ENCODE measurements at regions of chr2 and their contacts with region 1.

Region 1: GRCh38 chr2:182077451-182078142 is 91.9 kb downstream of the PPP1R1C start:
- DNase-seq: peak in 2 of 4 experiments; percentile 7 to 68
- ATAC-seq: peak; percentile 74
- H3K4me3 ChIP-seq: no peak overlapping the region
- H3K27ac ChIP-seq: no peak overlapping the region
- H3K4me1 ChIP-seq: no peaks in the 10 kb centered on the region
- H3K27me3 ChIP-seq: no peaks in the 10 kb centered on the region
- CTCF ChIP-seq: peak; percentile 21 to 64 (median 59); a peak in 5 of 6 replicates
- EP300 ChIP-seq: no peak
- POLR2A ChIP-seq: no peak
- RAD21 ChIP-seq: peak; percentile 70 to 83

Region 2: GRCh38 chr2:181738074-181738473 is 339.5 kb before region 1 on chr2:
- CTCF ChIA-PET with region 1: interaction called, 8 read pairs
- POLR2A ChIA-PET with region 1: no interaction called
- in situ Hi-C with region 1: loop called (anchors 10 kb)
- intact Hi-C with region 1: loop called (anchors 1 kb)
- DNase-seq: peak in 2 of 4 experiments; percentile 8 to 11
- ATAC-seq: peak; percentile 67
- H3K4me3 ChIP-seq: no peak overlapping the region
- H3K27ac ChIP-seq: no peak overlapping the region
- H3K4me1 ChIP-seq: no peaks in the 10 kb centered on the region
- H3K27me3 ChIP-seq: no peaks in the 10 kb centered on the region
- CTCF ChIP-seq: peak; percentile 21 to 55 (median 24); a peak in 3 of 6 replicates
- EP300 ChIP-seq: no peak
- POLR2A ChIP-seq: no peak
- RAD21 ChIP-seq: peak; percentile 32 to 63; a peak in 3 of 4 replicates

Region 3: GRCh38 chr2:181953881-181954537 is 123.6 kb before region 1 on chr2:
- CTCF ChIA-PET with region 1: no interaction called
- POLR2A ChIA-PET with region 1: no interaction called
- in situ Hi-C with region 1: no loop called
- intact Hi-C with region 1: loop called (anchors 5 kb)
- DNase-seq: peak; percentile 67 to 85 (median 74)
- ATAC-seq: peak; percentile 96
- H3K4me3 ChIP-seq: peak overlapping the region; percentile 40
- H3K27ac ChIP-seq: peak overlapping the region; percentile 50; the same call in 1 of the 3 replicates
- H3K4me1 ChIP-seq: no peaks in the 10 kb centered on the region
- H3K27me3 ChIP-seq: no peaks in the 10 kb centered on the region
- CTCF ChIP-seq: peak; percentile 68 to 80 (median 70)
- EP300 ChIP-seq: no peak
- POLR2A ChIP-seq: no peak
- RAD21 ChIP-seq: peak; percentile 37 to 60

Region 4: GRCh38 chr2:182101263-182101662 is 23.7 kb after region 1 on chr2:
- CTCF ChIA-PET with region 1: no interaction called
- POLR2A ChIA-PET with region 1: no interaction called
- in situ Hi-C with region 1: no loop called
- intact Hi-C with region 1: no loop called
- DNase-seq: peak in 2 of 4 experiments; percentile 20 to 28
- ATAC-seq: no peak
- H3K4me3 ChIP-seq: no peak overlapping the region
- H3K27ac ChIP-seq: no peak overlapping the region
- H3K4me1 ChIP-seq: no peaks in the 10 kb centered on the region
- H3K27me3 ChIP-seq: no peaks in the 10 kb centered on the region
- CTCF ChIP-seq: no peak
- EP300 ChIP-seq: no peak
- POLR2A ChIP-seq: no peak
- RAD21 ChIP-seq: no peak

Region 5: DNA sequence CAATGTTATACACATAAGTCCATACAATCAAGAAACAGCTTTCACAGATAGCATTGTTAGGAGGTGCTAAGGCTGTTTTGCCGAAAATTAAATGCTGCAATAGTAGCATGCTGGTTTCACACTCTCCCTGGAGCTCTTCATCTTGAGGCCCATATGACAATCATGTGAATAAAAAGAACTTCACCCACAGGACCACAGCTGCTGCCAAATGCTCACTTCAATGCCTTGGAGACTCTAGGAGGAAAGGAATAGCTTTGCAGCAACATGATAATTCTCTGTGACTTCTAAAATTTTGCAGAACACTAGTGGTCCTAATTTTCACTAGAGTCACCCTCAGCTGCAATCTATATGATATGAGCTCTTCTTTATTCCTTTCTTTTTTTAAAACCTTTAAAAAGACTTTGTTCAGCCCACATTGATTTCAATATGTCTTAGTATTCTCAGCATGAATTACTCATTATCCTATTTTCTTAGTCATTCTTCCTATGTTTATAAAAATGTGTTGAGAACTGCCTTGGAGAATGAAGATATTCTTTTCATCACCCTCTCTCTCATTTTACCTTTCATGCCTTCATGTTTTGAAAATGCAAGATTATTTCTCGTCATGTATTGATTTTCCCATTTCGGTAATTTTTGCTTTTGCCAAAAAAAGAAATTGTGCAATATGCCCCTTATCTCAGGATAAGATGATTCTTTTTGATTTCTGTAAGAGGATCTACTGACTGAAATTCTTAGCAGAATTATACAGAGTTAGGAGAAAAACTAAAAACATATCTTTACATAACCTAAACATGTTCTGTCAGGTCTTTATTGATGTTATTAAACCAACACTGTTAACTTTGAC is 241.1 kb after region 1 on chr2:
- CTCF ChIA-PET with region 1: no interaction called
- POLR2A ChIA-PET with region 1: no interaction called
- in situ Hi-C with region 1: no loop called
- intact Hi-C with region 1: no loop called
- DNase-seq: no peak
- ATAC-seq: no peak
- H3K4me3 ChIP-seq: no peak overlapping the region
- H3K27ac ChIP-seq: no peak overlapping the region
- H3K4me1 ChIP-seq: no peaks in the 10 kb centered on the region
- H3K27me3 ChIP-seq: no peaks in the 10 kb centered on the region
- CTCF ChIP-seq: no peak
- EP300 ChIP-seq: no peak
- POLR2A ChIP-seq: no peak
- RAD21 ChIP-seq: no peak

Measured in K562 (cell line).